ENCODE measurements at regions of chr2 and their contacts with region 1.

Region 1: GRCh38 chr2:98479959-98480524 is 35.4 kb downstream of the INPP4A start:
- DNase-seq: peak; percentile 99
- H3K4me3 ChIP-seq: no peak overlapping the region
- H3K27ac ChIP-seq: peak overlapping the region; percentile 74
- H3K4me1 ChIP-seq: peaks cover 57% of the 10 kb centered on the region
- H3K27me3 ChIP-seq: no peaks in the 10 kb centered on the region
- CTCF ChIP-seq: no peak

Region 2: GRCh38 chr2:98444436-98445176 is 35.4 kb before region 1 on chr2 and contains the start of gene INPP4A:
- CTCF ChIA-PET with region 1: no interaction called
- dilution Hi-C with region 1: no loop called
- in situ Hi-C with region 1: no loop called
- intact Hi-C with region 1: loop called (anchors 5 kb)
- DNase-seq: peak; percentile 48
- H3K4me3 ChIP-seq: peak within 1 kb of the TSS; percentile 69 to 88 (median 85)
- H3K27ac ChIP-seq: peak within 1 kb of the TSS; percentile 76
- H3K4me1 ChIP-seq: peaks cover 4% of the 10 kb centered on the region
- H3K27me3 ChIP-seq: no peaks in the 10 kb centered on the region
- CTCF ChIP-seq: peak in 1 of 2 donors; percentile 16
- total RNA-seq, gene INPP4A: 26.3 to 36.5 TPM

Region 3: DNA sequence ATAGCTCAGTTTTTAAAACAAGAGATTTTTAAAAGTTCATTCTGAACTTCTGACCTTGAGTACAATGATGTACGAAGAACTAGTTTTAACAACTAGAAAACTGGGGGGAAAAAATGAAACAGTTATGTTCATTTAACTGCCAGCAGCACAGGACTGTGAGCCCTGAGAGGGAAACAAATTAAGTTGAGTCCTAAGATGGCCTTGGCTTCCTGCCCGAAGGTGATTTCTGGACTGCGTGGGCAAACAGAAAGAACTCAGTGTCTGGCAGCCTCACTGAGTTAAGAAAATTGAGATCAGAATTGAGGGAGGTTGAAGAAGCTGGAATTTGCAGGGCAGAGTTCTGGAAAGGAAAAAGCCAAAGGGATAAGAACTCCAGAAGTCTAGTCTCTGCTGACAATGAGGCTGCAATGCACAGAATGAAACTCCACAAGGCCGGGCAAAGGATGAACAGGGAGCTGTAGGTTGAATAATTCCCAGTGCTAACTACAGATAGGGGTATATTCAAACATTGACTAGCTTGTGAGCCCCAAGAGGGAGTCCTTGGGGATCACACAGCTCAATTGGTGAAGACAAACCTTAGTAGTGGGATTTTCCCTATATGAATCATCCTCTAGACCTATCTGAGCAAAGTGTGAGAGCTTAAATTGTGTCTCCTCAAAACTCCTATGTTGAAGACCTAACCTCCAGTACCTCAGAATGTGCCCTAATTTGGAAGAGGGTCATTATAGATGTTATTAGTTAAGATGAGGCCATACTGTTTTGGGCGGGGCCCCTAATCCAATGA is 469.1 kb after region 1 on chr2:
- CTCF ChIA-PET with region 1: no interaction called
- dilution Hi-C with region 1: no loop called
- in situ Hi-C with region 1: no loop called
- intact Hi-C with region 1: no loop called
- DNase-seq: peak; percentile 35
- H3K4me3 ChIP-seq: no peak overlapping the region
- H3K27ac ChIP-seq: no peak overlapping the region
- H3K4me1 ChIP-seq: peaks cover 10% of the 10 kb centered on the region
- H3K27me3 ChIP-seq: no peaks in the 10 kb centered on the region
- CTCF ChIP-seq: no peak

Measured in mammary epithelial cell (primary cell).